Left colon (tissue), 2 donors: ENCODE measurements at regions of chr16 and their contacts with region 1.

Region 1: GRCh38 chr16:27268376-27269299 is at the start of gene NSMCE1:
- DNase-seq: peak; percentile 98 to 99
- ATAC-seq: peak; percentile 100
- total RNA-seq, gene NSMCE1: 44.4 to 44.7 TPM

Region 2: GRCh38 chr16:27005386-27005785 is 263.3 kb before region 1 on chr16:
- intact Hi-C with region 1: no loop called
- DNase-seq: no peak
- ATAC-seq: no peak

Region 3: DNA sequence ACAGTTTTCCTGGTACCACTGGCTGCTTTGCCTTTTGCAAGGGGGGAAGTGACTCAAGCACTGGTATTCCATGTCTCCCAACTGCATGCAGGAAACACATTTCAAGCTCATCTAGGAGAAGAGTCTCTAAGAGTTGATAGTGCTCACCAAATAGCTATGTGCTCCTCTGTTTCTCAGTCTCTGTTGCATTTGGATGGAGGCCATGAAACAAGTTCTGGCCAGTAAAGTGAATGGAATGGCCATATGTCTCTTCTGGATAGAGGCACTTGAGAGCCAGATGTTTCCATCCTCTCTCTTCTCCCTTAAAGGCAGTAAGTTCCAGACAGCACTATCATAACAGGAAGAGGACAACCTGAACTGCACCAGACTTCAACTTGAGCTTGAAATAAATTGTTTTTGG is 141.3 kb before region 1 on chr16:
- intact Hi-C with region 1: no loop called
- DNase-seq: no peak
- ATAC-seq: no peak

Region 4: GRCh38 chr16:27222249-27223225 is 46.1 kb before region 1 on chr16:
- intact Hi-C with region 1: no loop called
- DNase-seq: no peak
- ATAC-seq: no peak

Region 5: GRCh38 chr16:27313422-27314160 is 45.0 kb after region 1 on chr16 and contains the start of gene IL4R:
- intact Hi-C with region 1: loop called in 1 of 2 experiments (anchors 10 kb)
- DNase-seq: peak; percentile 76 to 85
- ATAC-seq: peak; percentile 76
- total RNA-seq, gene IL4R: 118 to 140 TPM